HCT116 (cell line): ENCODE measurements at regions of chr19 and their contacts with region 1.

Region 1: GRCh38 chr19:3125900-3126524 is 9.8 kb upstream of the GNA15 start:
- DNase-seq: peak; percentile 60
- ATAC-seq: peak; percentile 96
- H3K4me3 ChIP-seq: no peak overlapping the region
- H3K27ac ChIP-seq: no peak overlapping the region
- H3K4me1 ChIP-seq: peaks cover 6 to 7% of the 10 kb centered on the region in 2 experiments; a peak in 3 of 4 replicates
- H3K27me3 ChIP-seq: no peaks in the 10 kb centered on the region
- CTCF ChIP-seq: peak; percentile 76 to 88 (median 81)
- POLR2A ChIP-seq: no peak
- RAD21 ChIP-seq: peak; percentile 52

Region 2: GRCh38 chr19:3102228-3103140 is 23.5 kb before region 1 on chr19:
- CTCF ChIA-PET with region 1: interaction called, 24 read pairs
- POLR2A ChIA-PET with region 1: no interaction called
- RAD21 ChIA-PET with region 1: no interaction called
- intact Hi-C with region 1: no loop called
- DNase-seq: no peak
- ATAC-seq: no peak
- H3K4me3 ChIP-seq: no peak overlapping the region
- H3K27ac ChIP-seq: no peak overlapping the region
- H3K4me1 ChIP-seq: peaks cover 7 to 13% of the 10 kb centered on the region in 2 experiments
- H3K27me3 ChIP-seq: no peaks in the 10 kb centered on the region
- CTCF ChIP-seq: no peak
- POLR2A ChIP-seq: no peak
- RAD21 ChIP-seq: no peak

Region 3: DNA sequence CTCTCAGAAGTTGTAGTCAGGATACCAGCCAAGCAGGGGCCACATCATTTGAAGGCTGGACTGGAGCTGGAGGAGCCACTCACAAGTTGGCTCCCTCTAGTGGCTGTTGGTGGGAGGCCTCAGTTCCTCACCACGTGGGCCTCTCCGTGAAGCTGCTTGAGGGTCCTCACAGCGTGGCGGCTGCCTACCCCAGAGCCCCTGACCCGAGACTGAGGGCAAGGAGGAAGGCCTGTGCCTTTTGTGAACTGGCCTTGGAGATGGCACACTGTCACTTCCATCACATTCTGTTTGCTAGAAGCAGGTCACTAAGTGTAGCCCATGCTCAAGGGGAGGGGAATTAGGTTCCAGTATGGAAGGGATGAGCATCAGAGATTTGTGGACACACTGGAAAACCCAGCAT is 17.2 kb before region 1 on chr19:
- CTCF ChIA-PET with region 1: interaction called, 24 read pairs
- POLR2A ChIA-PET with region 1: no interaction called
- RAD21 ChIA-PET with region 1: no interaction called
- intact Hi-C with region 1: no loop called
- DNase-seq: no peak
- ATAC-seq: peak; percentile 77
- H3K4me3 ChIP-seq: no peak overlapping the region
- H3K27ac ChIP-seq: no peak overlapping the region
- H3K4me1 ChIP-seq: peaks cover 3 to 5% of the 10 kb centered on the region in 2 experiments; a peak in 3 of 4 replicates
- H3K27me3 ChIP-seq: no peaks in the 10 kb centered on the region
- CTCF ChIP-seq: peak; percentile 49 to 95 (median 89); a peak in 5 of 6 replicates
- POLR2A ChIP-seq: no peak
- RAD21 ChIP-seq: no peak

Region 4: GRCh38 chr19:3142292-3142670 is 16.3 kb after region 1 on chr19:
- CTCF ChIA-PET with region 1: interaction called, 45 read pairs
- POLR2A ChIA-PET with region 1: no interaction called
- RAD21 ChIA-PET with region 1: interaction called in 1 of 2 experiments, 3 read pairs
- intact Hi-C with region 1: no loop called
- DNase-seq: peak; percentile 31
- ATAC-seq: peak; percentile 65
- H3K4me3 ChIP-seq: peak overlapping the region in 1 of 2 experiments; percentile 42; a peak in 2 of 4 replicates
- H3K27ac ChIP-seq: peak overlapping the region; percentile 31
- H3K4me1 ChIP-seq: peaks cover 12 to 18% of the 10 kb centered on the region in 2 experiments
- H3K27me3 ChIP-seq: no peaks in the 10 kb centered on the region
- CTCF ChIP-seq: no peak
- POLR2A ChIP-seq: no peak
- RAD21 ChIP-seq: no peak

Region 5: GRCh38 chr19:3163230-3163886 is 37.3 kb after region 1 on chr19:
- CTCF ChIA-PET with region 1: interaction called, 15 read pairs
- POLR2A ChIA-PET with region 1: no interaction called
- RAD21 ChIA-PET with region 1: interaction called, 3 to 6 read pairs
- intact Hi-C with region 1: loop called (anchors 1 kb)
- DNase-seq: no peak
- ATAC-seq: peak; percentile 98
- H3K4me3 ChIP-seq: no peak overlapping the region
- H3K27ac ChIP-seq: no peak overlapping the region
- H3K4me1 ChIP-seq: peaks cover 5 to 11% of the 10 kb centered on the region in 2 experiments; a peak in 2 of 4 replicates
- H3K27me3 ChIP-seq: no peaks in the 10 kb centered on the region
- CTCF ChIP-seq: peak; percentile 79 to 98 (median 92)
- POLR2A ChIP-seq: no peak
- RAD21 ChIP-seq: peak; percentile 92

Region 6: DNA sequence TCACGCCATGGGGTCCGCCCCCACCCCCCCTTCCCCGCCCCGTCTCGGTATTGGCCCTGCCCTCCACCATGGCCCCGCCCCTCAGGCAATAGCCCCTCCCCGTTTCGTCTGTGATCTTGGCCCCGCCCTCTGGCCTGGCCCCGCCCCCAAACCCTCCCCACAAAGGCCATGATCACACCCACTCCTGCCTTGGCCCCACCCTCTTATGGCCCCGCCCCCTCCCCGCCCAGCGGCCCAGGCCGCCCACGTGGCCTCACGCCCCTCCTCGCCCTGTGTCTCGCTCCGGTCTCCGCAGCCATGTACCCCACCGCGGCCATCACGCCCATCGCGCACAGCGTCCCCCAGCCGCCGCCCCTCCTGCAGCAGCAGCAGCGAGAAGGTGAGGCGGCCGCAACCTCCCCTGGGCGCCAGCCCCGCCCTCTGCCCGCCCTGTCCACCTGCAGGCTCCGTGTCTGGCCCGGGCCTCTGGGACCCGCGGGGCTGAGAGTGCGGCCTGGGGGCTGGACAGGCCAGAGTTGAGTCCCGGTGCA is 159.7 kb after region 1 on chr19:
- CTCF ChIA-PET with region 1: no interaction called
- POLR2A ChIA-PET with region 1: no interaction called
- RAD21 ChIA-PET with region 1: no interaction called
- intact Hi-C with region 1: no loop called
- DNase-seq: no peak
- ATAC-seq: peak; percentile 48
- H3K4me3 ChIP-seq: peak overlapping the region; percentile 60 to 61
- H3K27ac ChIP-seq: peak overlapping the region; percentile 60
- H3K4me1 ChIP-seq: peaks cover 11 to 29% of the 10 kb centered on the region in 2 experiments
- H3K27me3 ChIP-seq: no peaks in the 10 kb centered on the region
- CTCF ChIP-seq: no peak
- POLR2A ChIP-seq: no peak
- RAD21 ChIP-seq: no peak